Pancreas (tissue), 10 donors: ENCODE measurements at regions of chr1 and their contacts with region 1.

Region 1: DNA sequence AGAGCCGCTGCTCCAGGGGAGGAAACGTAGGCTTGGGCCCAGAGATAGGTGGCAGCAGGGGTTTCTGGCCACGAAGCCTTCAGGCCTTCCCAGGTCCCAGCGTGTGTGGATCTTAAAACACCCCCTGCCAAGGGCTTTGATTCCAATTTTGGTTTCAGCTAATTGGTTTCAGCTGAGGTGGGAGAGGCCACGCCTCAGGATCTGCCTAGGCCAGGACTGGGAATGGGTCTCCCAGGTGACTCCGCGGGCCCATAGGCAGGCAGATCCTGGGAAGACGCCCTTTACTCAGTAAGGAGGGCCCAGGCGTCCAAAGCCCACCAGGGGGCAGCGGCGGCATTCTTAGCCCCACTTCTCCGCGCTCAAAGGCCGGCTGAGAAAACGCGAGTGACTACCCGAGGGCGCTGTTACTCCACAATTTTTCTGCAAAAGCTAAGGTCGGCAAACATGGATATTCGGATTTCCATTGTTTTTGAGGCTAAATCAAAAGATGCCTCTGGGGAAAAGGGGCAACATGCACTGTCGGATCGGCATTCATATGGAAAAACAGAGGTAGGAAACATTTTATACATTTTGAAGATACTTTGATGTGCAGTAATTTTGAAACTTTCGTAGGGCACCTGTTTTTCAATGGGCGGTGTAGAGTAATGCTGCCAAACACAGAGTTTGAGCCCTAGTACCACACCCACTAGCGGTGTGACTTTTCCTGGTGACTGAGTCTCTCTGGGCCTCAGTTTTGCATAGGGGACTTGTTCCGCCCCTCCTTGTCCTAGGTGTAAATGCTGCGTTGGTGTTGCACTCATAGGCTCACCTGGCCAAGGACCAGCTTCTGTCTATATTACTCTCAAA is 31.8 kb upstream of the BCL10 start:
- DNase-seq: peak; percentile 83 to 94 (median 90)
- ATAC-seq: peak; percentile 99 to 100 (median 100)
- H3K4me3 ChIP-seq: no peak overlapping the region
- H3K27ac ChIP-seq: no peak overlapping the region
- H3K4me1 ChIP-seq: no peaks in the 10 kb centered on the region
- H3K27me3 ChIP-seq: no peaks in the 10 kb centered on the region
- CTCF ChIP-seq: peak; percentile 75 to 94 (median 89)

Region 2: DNA sequence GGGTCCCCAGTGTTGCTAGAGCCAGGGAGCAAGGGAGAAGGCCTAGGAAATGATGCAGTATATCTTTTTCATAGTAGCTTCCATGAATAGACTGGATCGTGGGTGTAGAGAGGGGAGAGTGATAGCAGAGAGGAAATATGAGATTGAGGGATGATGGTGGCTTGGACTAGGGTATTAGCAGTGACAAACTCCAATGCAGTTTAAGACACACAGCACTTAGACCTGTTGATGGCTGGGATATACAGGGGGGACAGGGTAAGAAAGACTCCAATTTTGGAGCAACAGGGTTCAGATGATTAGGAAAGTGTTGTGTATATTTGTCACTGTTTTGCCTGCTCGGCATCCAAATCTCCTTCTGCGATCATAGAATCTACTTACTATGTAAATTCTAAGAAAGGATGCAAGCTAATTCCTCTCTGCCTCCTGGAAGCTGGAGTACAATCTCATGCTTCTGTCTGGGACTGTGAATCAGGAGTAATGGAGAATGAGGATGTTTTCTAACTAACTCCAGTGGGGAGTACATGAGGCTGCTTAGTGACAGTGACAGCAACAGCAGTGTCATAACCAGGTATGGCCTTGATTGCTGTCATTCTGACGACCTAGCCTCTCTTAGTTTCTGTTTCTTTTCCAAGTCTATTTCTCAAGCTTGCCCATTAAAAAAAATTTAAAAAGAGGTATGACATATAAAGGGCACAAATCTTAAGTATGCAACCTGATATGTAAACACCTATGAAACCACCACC is 154.9 kb before region 1 on chr1:
- intact Hi-C with region 1: no loop called
- DNase-seq: no peak
- ATAC-seq: peak in 1 of 4 donors; percentile 35
- H3K4me3 ChIP-seq: no peak overlapping the region
- H3K27ac ChIP-seq: no peak overlapping the region
- H3K4me1 ChIP-seq: no peaks in the 10 kb centered on the region
- H3K27me3 ChIP-seq: no peaks in the 10 kb centered on the region
- CTCF ChIP-seq: no peak

Region 3: GRCh38 chr1:85502625-85503083 is 194.4 kb after region 1 on chr1:
- intact Hi-C with region 1: loop called in 2 of 3 experiments (anchors 5 to 10 kb)
- DNase-seq: peak in 5 of 6 donors; percentile 29 to 71 (median 56)
- ATAC-seq: peak; percentile 91 to 99 (median 96)
- H3K4me3 ChIP-seq: no peak overlapping the region
- H3K27ac ChIP-seq: no peak overlapping the region
- H3K4me1 ChIP-seq: peaks cover 0 to 10% (median 0%) of the 10 kb centered on the region in 3 donors
- H3K27me3 ChIP-seq: no peaks in the 10 kb centered on the region
- CTCF ChIP-seq: peak; percentile 40 to 57 (median 50)

Region 4: GRCh38 chr1:85580872-85581801 is 272.9 kb after region 1 on chr1:
- intact Hi-C with region 1: loop called in 1 of 3 experiments (anchors 10 kb)
- DNase-seq: peak; percentile 78 to 93 (median 86)
- ATAC-seq: peak; percentile 77 to 85 (median 80)
- H3K4me3 ChIP-seq: peak overlapping the region; percentile 45 to 88 (median 68)
- H3K27ac ChIP-seq: peak overlapping the region; percentile 92 to 97 (median 96)
- H3K4me1 ChIP-seq: peaks cover 0 to 4% (median 4%) of the 10 kb centered on the region in 3 donors
- H3K27me3 ChIP-seq: no peaks in the 10 kb centered on the region
- CTCF ChIP-seq: peak; percentile 56 to 79 (median 68)

Region 5: DNA sequence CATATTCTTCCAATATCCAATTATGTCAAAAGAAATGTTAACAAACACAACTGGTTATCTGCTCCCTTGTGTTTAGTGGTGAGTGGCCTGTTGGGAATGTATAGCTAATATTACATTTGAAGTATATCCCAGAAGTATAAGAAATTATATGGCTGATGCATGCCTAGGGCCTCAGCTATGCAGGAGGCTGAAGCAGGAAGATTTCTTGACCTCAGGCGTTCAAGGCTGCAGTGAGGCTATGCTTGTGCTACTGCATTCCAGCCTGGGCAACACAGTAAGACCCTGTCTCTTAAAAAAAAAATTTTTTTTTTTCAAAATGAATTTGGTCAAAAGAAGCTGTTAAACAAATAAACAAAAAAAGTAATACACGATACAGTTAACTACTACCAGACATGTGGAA is 363.0 kb after region 1 on chr1:
- intact Hi-C with region 1: no loop called
- DNase-seq: no peak
- ATAC-seq: no peak
- H3K4me3 ChIP-seq: no peak overlapping the region
- H3K27ac ChIP-seq: no peak overlapping the region
- H3K4me1 ChIP-seq: no peaks in the 10 kb centered on the region
- H3K27me3 ChIP-seq: no peaks in the 10 kb centered on the region
- CTCF ChIP-seq: no peak

Region 6: DNA sequence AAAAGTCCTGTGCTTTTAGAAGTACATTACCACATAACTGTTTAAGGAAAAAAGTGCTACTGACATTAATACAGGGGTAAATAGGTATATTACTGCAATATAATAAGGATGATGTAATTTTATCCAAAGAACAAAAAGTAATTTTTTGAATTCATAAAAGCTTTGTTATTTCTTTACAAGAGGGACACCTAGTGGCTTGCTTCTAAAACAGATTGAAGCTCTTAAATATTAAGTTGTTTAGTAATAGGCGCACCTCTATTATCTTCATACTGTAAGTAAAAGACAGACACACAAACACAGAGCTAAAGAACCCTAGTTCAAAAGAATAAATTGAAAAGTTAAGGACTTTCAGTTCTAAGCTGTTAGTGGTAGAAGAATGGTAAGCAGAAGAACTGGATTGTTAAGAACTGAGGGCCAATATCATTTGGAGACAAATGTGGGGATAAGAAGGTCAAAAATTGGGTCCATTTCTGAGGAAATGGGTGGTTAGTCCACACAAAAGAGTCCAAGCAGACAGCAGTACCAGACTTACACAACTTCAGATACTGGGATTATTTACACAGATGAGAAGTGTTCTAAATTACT is 384.6 kb after region 1 on chr1:
- intact Hi-C with region 1: loop called in 2 of 3 experiments (anchors 10 kb)
- DNase-seq: no peak
- ATAC-seq: peak in 2 of 4 donors; percentile 58 to 59
- H3K4me3 ChIP-seq: no peak overlapping the region
- H3K27ac ChIP-seq: no peak overlapping the region
- H3K4me1 ChIP-seq: peaks cover 0 to 4% (median 3%) of the 10 kb centered on the region in 3 donors
- H3K27me3 ChIP-seq: no peaks in the 10 kb centered on the region
- CTCF ChIP-seq: peak in 1 of 4 donors; percentile 11